Heart left ventricle (tissue), 16 donors: ENCODE measurements at regions of chr11 and their contacts with region 1.

Region 1: GRCh38 chr11:31641477-31642062 is 132.0 kb downstream of the ELP4 start:
- DNase-seq: peak in 1 of 5 donors; percentile 28
- ATAC-seq: no peak
- H3K4me3 ChIP-seq: no peak overlapping the region
- H3K27ac ChIP-seq: no peak overlapping the region
- H3K4me1 ChIP-seq: peaks cover 0 to 19% (median 0%) of the 10 kb centered on the region in 12 donors
- H3K27me3 ChIP-seq: no peaks in the 10 kb centered on the region
- CTCF ChIP-seq: peak; percentile 31 to 64 (median 52)
- POLR2A ChIP-seq: no peak

Region 2: GRCh38 chr11:31455177-31455576 is 186.4 kb before region 1 on chr11:
- intact Hi-C with region 1: no loop called
- DNase-seq: no peak
- ATAC-seq: no peak
- H3K4me3 ChIP-seq: no peak overlapping the region
- H3K27ac ChIP-seq: no peak overlapping the region
- H3K4me1 ChIP-seq: no peaks in the 10 kb centered on the region
- H3K27me3 ChIP-seq: no peaks in the 10 kb centered on the region
- CTCF ChIP-seq: no peak
- POLR2A ChIP-seq: no peak

Region 3: DNA sequence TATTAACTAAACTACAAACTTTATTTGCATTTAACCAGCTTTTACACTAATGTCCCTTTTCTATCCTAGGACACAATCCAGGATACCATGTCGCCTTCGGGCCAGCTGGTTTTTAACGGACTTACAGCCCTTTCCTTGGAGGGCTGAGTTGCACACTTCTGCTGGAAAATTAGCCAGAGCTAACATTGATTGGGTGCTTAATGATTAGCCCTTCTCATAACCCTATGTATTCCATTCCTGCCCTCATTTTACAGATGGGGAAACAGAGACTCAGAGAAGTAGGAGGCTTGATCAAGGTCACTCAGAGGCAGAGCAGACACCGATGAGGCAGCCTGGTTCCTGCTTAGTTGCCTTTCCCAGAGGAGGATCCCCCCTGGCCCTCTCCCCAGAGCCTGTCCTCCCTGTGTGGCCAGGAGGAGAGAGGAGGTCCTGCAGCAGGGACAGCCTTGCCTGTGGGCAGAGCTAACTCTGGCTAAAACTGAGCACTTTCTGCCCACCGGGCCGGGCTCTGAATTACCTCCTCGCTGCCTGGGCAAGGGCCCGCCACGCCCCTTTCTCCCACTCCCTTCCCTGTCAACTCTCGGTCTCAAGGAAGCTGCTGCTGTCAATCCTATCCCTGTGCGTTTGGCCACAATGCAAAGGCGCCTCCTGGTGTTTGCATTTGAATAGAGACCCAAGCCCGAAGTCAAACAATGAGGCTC is 229.2 kb after region 1 on chr11:
- intact Hi-C with region 1: loop called in 1 of 10 experiments (anchors 10 kb)
- DNase-seq: peak in 4 of 5 donors; percentile 13 to 39 (median 34)
- ATAC-seq: peak in 3 of 4 donors; percentile 45 to 67 (median 50)
- H3K4me3 ChIP-seq: no peak overlapping the region
- H3K27ac ChIP-seq: no peak overlapping the region
- H3K4me1 ChIP-seq: peaks cover 0 to 5% (median 0%) of the 10 kb centered on the region in 12 donors
- H3K27me3 ChIP-seq: peaks cover 0 to 55% (median 6%) of the 10 kb centered on the region in 9 donors
- CTCF ChIP-seq: peak; percentile 39 to 71 (median 62)
- POLR2A ChIP-seq: no peak

Region 4: DNA sequence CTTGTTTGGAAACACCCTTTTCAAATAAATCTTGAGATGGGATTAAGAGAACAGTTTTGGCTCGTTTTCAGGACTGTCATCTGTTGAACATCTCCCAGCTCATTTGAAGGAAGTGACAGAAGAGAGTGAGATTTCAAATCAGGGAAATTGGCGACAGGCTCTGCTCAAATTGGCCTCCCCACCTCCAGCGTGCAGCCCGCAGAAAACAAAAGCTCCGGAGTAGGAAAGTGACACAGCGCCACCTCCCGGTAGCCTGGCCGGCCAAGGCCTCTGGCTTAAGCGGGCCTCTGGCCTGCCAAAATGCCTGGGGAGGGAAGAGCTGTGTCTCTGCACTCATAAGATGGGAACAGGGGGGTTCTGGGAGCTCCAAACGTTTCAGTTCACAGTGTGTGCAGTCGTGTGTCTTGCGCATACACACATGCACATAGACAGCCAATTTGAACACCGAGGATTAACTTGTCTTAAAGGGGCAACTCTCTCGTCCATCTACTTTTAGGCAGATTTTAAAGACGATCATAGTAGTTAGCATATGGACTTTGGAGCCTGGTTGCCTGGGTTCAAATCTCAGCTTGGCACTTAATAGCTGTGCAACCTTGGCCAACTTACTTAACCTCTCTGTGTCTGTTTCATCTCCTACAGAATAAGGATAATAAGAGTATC is 316.6 kb after region 1 on chr11:
- intact Hi-C with region 1: loop called in 7 of 10 experiments (anchors 2 to 10 kb)
- DNase-seq: peak; percentile 60 to 82 (median 63)
- ATAC-seq: peak; percentile 74 to 92 (median 81)
- H3K4me3 ChIP-seq: no peak overlapping the region
- H3K27ac ChIP-seq: no peak overlapping the region
- H3K4me1 ChIP-seq: peaks cover 0 to 5% (median 0%) of the 10 kb centered on the region in 12 donors
- H3K27me3 ChIP-seq: no peaks in the 10 kb centered on the region
- CTCF ChIP-seq: peak; percentile 64 to 86 (median 78)
- POLR2A ChIP-seq: no peak

Region 5: GRCh38 chr11:31968461-31969358 is 327.1 kb after region 1 on chr11:
- intact Hi-C with region 1: loop called in 1 of 10 experiments (anchors 10 kb)
- DNase-seq: peak in 3 of 5 donors; percentile 17 to 39 (median 38)
- ATAC-seq: peak in 3 of 4 donors; percentile 62 to 94 (median 82)
- H3K4me3 ChIP-seq: no peak overlapping the region
- H3K27ac ChIP-seq: no peak overlapping the region
- H3K4me1 ChIP-seq: peaks cover 0 to 21% (median 2%) of the 10 kb centered on the region in 12 donors
- H3K27me3 ChIP-seq: peaks cover 0 to 6% (median 0%) of the 10 kb centered on the region in 9 donors
- CTCF ChIP-seq: no peak
- POLR2A ChIP-seq: no peak

Region 6: DNA sequence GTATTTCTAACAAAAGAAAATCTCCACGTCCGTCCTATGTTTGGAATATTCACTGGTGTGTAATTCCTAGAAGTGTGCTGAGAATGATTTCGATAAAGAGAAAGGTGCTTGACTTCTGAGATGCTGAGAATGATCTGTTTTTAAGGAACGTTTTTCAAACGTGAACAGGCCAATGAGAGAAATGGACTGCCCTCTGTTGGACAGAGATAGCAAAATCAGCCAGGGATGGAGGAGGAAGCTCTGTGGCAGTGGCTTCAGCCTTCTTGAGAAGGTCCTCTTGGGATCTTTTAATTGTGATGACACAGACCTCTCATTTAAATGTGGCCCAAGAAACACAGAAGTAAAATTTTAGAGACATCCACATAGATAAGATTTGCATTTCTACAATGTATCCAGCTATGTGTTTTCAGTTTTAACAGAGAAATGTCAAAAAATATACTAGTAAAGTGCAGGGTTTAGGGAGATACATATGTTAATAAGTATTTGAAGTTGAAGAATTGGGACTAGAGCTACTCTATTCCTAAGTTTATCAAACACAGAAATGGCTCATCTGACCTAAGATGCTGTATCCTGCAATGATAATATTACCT is 365.3 kb after region 1 on chr11:
- intact Hi-C with region 1: loop called in 1 of 10 experiments (anchors 5 kb)
- DNase-seq: no peak
- ATAC-seq: peak in 1 of 4 donors; percentile 63
- H3K4me3 ChIP-seq: peak overlapping the region in 1 of 12 donors; percentile 26
- H3K27ac ChIP-seq: no peak overlapping the region
- H3K4me1 ChIP-seq: no peaks in the 10 kb centered on the region
- H3K27me3 ChIP-seq: peaks cover 0 to 84% (median 23%) of the 10 kb centered on the region in 9 donors
- CTCF ChIP-seq: peak; percentile 37 to 72 (median 56)
- POLR2A ChIP-seq: no peak

Region 7: GRCh38 chr11:32176223-32176934 is 534.8 kb after region 1 on chr11:
- intact Hi-C with region 1: loop called in 1 of 10 experiments (anchors 10 kb)
- DNase-seq: peak in 4 of 5 donors; percentile 54 to 70 (median 66)
- ATAC-seq: peak in 3 of 4 donors; percentile 62 to 78 (median 74)
- H3K4me3 ChIP-seq: no peak overlapping the region
- H3K27ac ChIP-seq: no peak overlapping the region
- H3K4me1 ChIP-seq: peaks cover 0 to 9% (median 0%) of the 10 kb centered on the region in 12 donors
- H3K27me3 ChIP-seq: peaks cover 0 to 7% (median 0%) of the 10 kb centered on the region in 9 donors
- CTCF ChIP-seq: peak; percentile 82 to 96 (median 88)
- POLR2A ChIP-seq: no peak